HepG2 (cell line): ENCODE measurements at regions of chr5 and their contacts with region 1.

Region 1: GRCh38 chr5:150846654-150847333 is 473 bp downstream of the IRGM start:
- DNase-seq: peak; percentile 78
- ATAC-seq: peak; percentile 93
- H3K4me3 ChIP-seq: no peak overlapping the region
- H3K27ac ChIP-seq: no peak overlapping the region
- H3K4me1 ChIP-seq: no peaks in the 10 kb centered on the region
- H3K27me3 ChIP-seq: peaks cover 0 to 10% of the 10 kb centered on the region in 2 experiments; a peak in 1 of 5 replicates
- CTCF ChIP-seq: peak; percentile 90
- EP300 ChIP-seq: no peak
- POLR2A ChIP-seq: no peak
- RAD21 ChIP-seq: peak; percentile 52; the same call in 1 of the 2 replicates

Region 2: GRCh38 chr5:150302301-150303069 is 544.3 kb before region 1 on chr5 and contains the start of gene ARSI:
- CTCF ChIA-PET with region 1: no interaction called
- POLR2A ChIA-PET with region 1: no interaction called
- in situ Hi-C with region 1: no loop called
- intact Hi-C with region 1: no loop called
- DNase-seq: no peak
- ATAC-seq: peak; percentile 92
- H3K4me3 ChIP-seq: peak within 1 kb of the TSS; percentile 66 to 78 (median 72)
- H3K27ac ChIP-seq: no peak within 1 kb of the TSS
- H3K4me1 ChIP-seq: peaks cover 78% of the 10 kb centered on the region
- H3K27me3 ChIP-seq: no peaks in the 10 kb centered on the region
- CTCF ChIP-seq: peak; percentile 76
- EP300 ChIP-seq: no peak
- POLR2A ChIP-seq: no peak
- RAD21 ChIP-seq: peak; percentile 63
- total RNA-seq, gene ARSI: 17.6 and 33.9 TPM in 2 replicates

Region 3: GRCh38 chr5:150656191-150657132 is 190.3 kb before region 1 on chr5:
- CTCF ChIA-PET with region 1: no interaction called
- POLR2A ChIA-PET with region 1: no interaction called
- in situ Hi-C with region 1: no loop called
- intact Hi-C with region 1: loop called (anchors 5 kb)
- DNase-seq: peak; percentile 35
- ATAC-seq: peak; percentile 61
- H3K4me3 ChIP-seq: peak overlapping the region; percentile 49 to 75 (median 60)
- H3K27ac ChIP-seq: no peak overlapping the region
- H3K4me1 ChIP-seq: peaks cover 18% of the 10 kb centered on the region
- H3K27me3 ChIP-seq: peaks cover 2 to 21% of the 10 kb centered on the region in 2 experiments; a peak in 2 of 5 replicates
- CTCF ChIP-seq: peak; percentile 78
- EP300 ChIP-seq: no peak
- POLR2A ChIP-seq: no peak
- RAD21 ChIP-seq: peak; percentile 87

Region 4: GRCh38 chr5:150801117-150801927 is 45.5 kb before region 1 on chr5:
- CTCF ChIA-PET with region 1: interaction called, 23 read pairs
- POLR2A ChIA-PET with region 1: no interaction called
- in situ Hi-C with region 1: loop called (anchors 5 kb)
- intact Hi-C with region 1: loop called (anchors 1 kb)
- DNase-seq: peak; percentile 62
- ATAC-seq: peak; percentile 95
- H3K4me3 ChIP-seq: peak overlapping the region; percentile 48 to 66 (median 65); a peak in 5 of 6 replicates
- H3K27ac ChIP-seq: no peak overlapping the region
- H3K4me1 ChIP-seq: peaks cover 14% of the 10 kb centered on the region
- H3K27me3 ChIP-seq: no peaks in the 10 kb centered on the region; a peak in 1 of 5 replicates
- CTCF ChIP-seq: peak; percentile 68
- EP300 ChIP-seq: no peak; a peak in 1 of 4 replicates
- POLR2A ChIP-seq: no peak
- RAD21 ChIP-seq: 0 out of 2 replicates have a peak, but pooled peaks have one; percentile 11

Region 5: GRCh38 chr5:150836064-150836463 is 10.7 kb before region 1 on chr5:
- CTCF ChIA-PET with region 1: no interaction called
- POLR2A ChIA-PET with region 1: no interaction called
- in situ Hi-C with region 1: no loop called
- intact Hi-C with region 1: no loop called
- DNase-seq: no peak
- ATAC-seq: no peak
- H3K4me3 ChIP-seq: no peak overlapping the region
- H3K27ac ChIP-seq: no peak overlapping the region
- H3K4me1 ChIP-seq: no peaks in the 10 kb centered on the region
- H3K27me3 ChIP-seq: peaks cover under 1 to 15% of the 10 kb centered on the region in 2 experiments; a peak in 3 of 5 replicates
- CTCF ChIP-seq: no peak
- EP300 ChIP-seq: no peak
- POLR2A ChIP-seq: no peak
- RAD21 ChIP-seq: no peak